Spleen (tissue), 13 donors: ENCODE measurements at regions of chr9 and their contacts with region 1.

Region 1: GRCh38 chr9:128504485-128505413 is at the start of gene GLE1:
- DNase-seq: peak; percentile 99
- H3K4me3 ChIP-seq: peak within 1 kb of the TSS; percentile 72 to 98 (median 89)
- H3K27ac ChIP-seq: peak within 1 kb of the TSS; percentile 83 to 95 (median 92)
- H3K4me1 ChIP-seq: peaks cover 10 to 55% (median 28%) of the 10 kb centered on the region in 6 donors
- H3K27me3 ChIP-seq: no peaks in the 10 kb centered on the region
- CTCF ChIP-seq: peak in 1 of 11 experiments; percentile 22
- POLR2A ChIP-seq: peak in 2 of 3 donors; percentile 26 to 44
- total RNA-seq, gene GLE1: 20.8 to 31.2 (median 25.8) TPM

Region 2: GRCh38 chr9:127715394-127716337 is 789.1 kb before region 1 on chr9 and contains the starts of genes PTRH1 and TTC16:
- intact Hi-C with region 1: no loop called
- DNase-seq: peak; percentile 99
- H3K4me3 ChIP-seq: peak within 1 kb of the TSS; percentile 57 to 94 (median 76)
- H3K27ac ChIP-seq: peak within 1 kb of the TSS; percentile 61 to 91 (median 86)
- H3K4me1 ChIP-seq: peaks cover 11 to 62% (median 32%) of the 10 kb centered on the region in 6 donors
- H3K27me3 ChIP-seq: no peaks in the 10 kb centered on the region
- CTCF ChIP-seq: peak in 3 of 11 experiments; percentile 15 to 37 (median 24)
- POLR2A ChIP-seq: no peak
- total RNA-seq, gene PTRH1: 8.1 to 17.9 (median 10.7) TPM
- total RNA-seq, gene TTC16: 0.60 to 3.1 (median 2.0) TPM

Region 3: DNA sequence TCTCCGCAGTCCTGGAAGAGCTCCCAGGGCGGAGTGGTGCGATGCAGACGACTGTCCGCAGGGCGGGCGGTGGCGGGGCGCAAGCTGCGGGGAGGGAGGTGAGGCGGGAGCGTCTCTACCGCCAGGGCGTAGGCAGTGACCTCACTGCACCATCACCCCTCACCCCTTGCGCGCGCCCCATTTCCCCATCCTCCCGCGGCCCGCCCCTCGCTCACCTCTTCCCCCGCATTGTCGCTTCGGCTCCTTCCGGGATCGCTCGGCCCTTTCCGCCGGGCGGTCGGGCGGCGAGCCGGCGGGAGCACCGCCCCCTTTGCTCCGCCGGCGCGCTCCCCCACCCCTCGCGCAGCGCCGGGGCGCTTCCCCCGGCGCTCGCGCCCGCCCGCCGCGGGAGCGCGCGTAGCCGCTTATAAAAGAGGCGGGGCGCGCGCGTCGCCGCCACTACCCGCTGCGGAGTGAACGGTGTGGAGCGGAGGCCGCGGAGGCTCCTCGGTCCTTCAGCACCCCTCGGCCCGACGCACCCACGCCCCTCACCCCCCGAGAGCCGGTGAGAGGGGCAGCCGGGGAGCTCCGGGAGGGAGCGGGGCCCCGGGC is 47.5 kb after region 1 on chr9 and contains the start of gene SPTAN1:
- intact Hi-C with region 1: loop called (anchors 10 kb)
- DNase-seq: peak; percentile 98
- H3K4me3 ChIP-seq: peak within 1 kb of the TSS; percentile 84 to 97 (median 92)
- H3K27ac ChIP-seq: peak within 1 kb of the TSS; percentile 93 to 99 (median 97)
- H3K4me1 ChIP-seq: peaks cover 33 to 72% (median 63%) of the 10 kb centered on the region in 6 donors
- H3K27me3 ChIP-seq: no peaks in the 10 kb centered on the region
- CTCF ChIP-seq: peak in 7 of 11 experiments; percentile 15 to 46 (median 25)
- POLR2A ChIP-seq: peak; percentile 86 to 96 (median 93)
- total RNA-seq, gene SPTAN1: 228 to 386 (median 292) TPM

Region 4: GRCh38 chr9:128575469-128575868 is 70.7 kb after region 1 on chr9:
- intact Hi-C with region 1: no loop called
- DNase-seq: no peak
- H3K4me3 ChIP-seq: no peak overlapping the region
- H3K27ac ChIP-seq: peak overlapping the region in 4 of 8 donors; percentile 4 to 35 (median 10)
- H3K4me1 ChIP-seq: peaks cover 0 to 15% (median 0%) of the 10 kb centered on the region in 6 donors
- H3K27me3 ChIP-seq: no peaks in the 10 kb centered on the region
- CTCF ChIP-seq: no peak
- POLR2A ChIP-seq: no peak